Activated CD4-positive, alpha-beta T cell treated with anti-CD3 and anti-CD28 coated beads for 36 hours (primary cell): ENCODE measurements at regions of chr1 and their contacts with region 1.

Region 1: DNA sequence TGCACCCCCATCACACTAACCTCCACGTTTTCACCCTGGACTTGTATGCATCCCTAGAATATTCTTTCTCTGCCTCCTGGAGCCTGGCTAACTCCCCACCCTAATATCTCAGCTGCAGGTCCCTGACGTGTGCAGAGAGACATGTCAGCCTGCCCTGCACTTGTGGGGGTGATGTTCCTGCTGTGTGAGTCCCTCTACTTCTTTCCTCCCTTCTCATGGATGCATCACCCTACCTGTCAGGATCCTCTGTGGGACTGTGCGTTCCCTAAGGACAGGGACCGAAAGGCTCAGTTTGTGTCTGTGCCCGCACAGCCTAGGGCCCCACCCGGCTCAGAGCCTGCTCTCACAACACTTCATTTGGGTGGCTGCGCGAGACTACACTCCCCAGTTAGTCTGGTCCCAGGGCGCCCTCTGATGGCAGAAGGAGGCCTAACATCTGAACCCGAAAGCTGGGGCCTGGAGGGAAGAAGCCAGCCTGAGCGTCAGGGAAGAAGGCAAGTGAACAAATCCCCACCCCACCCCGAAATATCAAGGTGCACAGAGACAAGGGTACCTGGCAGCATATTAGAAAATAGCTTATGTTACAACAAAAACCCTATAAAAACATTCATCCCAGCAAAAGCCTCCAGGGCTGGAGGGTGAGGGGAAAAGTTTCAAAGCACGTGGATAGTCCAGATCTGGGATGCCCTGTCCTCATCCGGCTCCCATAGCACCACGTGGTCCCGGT is 3.7 kb downstream of the CD52 start:
- DNase-seq: peak; percentile 97
- ATAC-seq: peak; percentile 62
- H3K4me3 Mint-ChIP-seq: peak overlapping the region; percentile 59
- H3K27ac Mint-ChIP-seq: peak overlapping the region; percentile 96
- H3K4me1 Mint-ChIP-seq: peaks cover 51% of the 10 kb centered on the region
- H3K27me3 Mint-ChIP-seq: no peaks in the 10 kb centered on the region

Region 2: DNA sequence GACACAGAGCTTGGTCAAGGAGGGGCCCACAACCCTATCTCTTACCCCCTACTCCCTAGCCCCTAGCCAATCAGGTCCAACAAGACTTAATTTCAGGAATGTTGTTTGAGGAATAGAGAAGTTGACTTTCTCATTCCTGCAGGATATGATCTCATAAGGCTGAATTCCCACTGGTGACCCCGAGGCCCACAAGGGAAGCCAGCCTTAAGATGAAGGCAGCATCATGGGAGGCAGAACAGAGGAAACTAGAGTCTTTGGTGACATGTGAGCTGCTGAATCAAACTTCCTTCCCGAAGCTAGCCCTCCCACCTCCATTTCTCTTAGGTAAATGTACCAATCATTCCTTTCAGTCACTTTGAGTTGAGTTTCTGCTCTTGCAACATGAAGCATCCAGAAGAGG is 219.0 kb before region 1 on chr1:
- CTCF ChIA-PET with region 1: no interaction called
- POLR2A ChIA-PET with region 1: no interaction called
- intact Hi-C with region 1: loop called (anchors 1 to 2 kb)
- DNase-seq: no peak
- ATAC-seq: no peak
- H3K4me3 Mint-ChIP-seq: no peak overlapping the region
- H3K27ac Mint-ChIP-seq: no peak overlapping the region
- H3K4me1 Mint-ChIP-seq: peaks cover 7% of the 10 kb centered on the region
- H3K27me3 Mint-ChIP-seq: no peaks in the 10 kb centered on the region

Region 3: DNA sequence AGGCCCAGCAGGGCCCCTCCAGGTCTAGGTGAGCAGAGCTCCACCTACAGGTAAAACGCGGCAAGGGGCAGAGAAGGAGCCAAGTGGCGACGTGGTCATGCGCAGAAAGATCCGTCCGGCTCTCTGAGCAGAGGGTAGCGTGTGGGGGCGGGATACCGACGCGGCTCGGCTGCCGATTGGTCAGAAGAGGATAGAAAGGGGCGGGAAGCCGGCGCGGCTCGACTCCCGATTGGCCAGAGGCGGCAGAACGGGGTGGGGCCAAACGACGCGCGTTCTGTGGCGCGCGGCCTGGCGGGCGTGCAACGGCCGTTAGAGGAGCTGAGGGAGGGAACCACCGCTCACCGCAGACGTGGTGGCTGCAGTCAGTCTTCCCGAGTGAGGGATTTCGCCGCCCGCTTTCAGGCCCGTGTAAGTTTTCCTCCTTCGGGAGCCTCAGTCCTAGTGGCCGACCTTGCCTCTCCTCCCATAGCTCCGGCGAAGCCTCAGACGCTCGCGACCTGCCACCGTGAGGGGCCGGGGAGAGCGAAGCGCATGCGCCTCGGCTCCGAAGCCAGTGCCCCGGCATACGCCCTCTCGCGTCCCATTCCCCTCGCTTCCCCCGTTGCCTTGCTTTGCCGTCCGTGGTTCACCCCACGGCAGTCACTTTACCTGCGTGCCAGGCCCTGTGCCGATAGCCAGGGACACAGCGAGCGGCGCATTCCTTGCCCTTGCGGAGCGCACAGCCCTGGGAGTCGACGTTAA is 87.4 kb before region 1 on chr1 and contains the start of gene CEP85:
- CTCF ChIA-PET with region 1: interaction called, 13 read pairs
- POLR2A ChIA-PET with region 1: no interaction called
- intact Hi-C with region 1: loop called in 1 of 2 experiments (anchors 1 kb)
- DNase-seq: peak; percentile 99
- ATAC-seq: peak; percentile 95
- H3K4me3 Mint-ChIP-seq: peak within 1 kb of the TSS; percentile 99
- H3K27ac Mint-ChIP-seq: peak within 1 kb of the TSS; percentile 96
- H3K4me1 Mint-ChIP-seq: peaks cover 32% of the 10 kb centered on the region
- H3K27me3 Mint-ChIP-seq: no peaks in the 10 kb centered on the region
- total RNA-seq, gene CEP85: 31.1 to 31.9 TPM

Region 4: DNA sequence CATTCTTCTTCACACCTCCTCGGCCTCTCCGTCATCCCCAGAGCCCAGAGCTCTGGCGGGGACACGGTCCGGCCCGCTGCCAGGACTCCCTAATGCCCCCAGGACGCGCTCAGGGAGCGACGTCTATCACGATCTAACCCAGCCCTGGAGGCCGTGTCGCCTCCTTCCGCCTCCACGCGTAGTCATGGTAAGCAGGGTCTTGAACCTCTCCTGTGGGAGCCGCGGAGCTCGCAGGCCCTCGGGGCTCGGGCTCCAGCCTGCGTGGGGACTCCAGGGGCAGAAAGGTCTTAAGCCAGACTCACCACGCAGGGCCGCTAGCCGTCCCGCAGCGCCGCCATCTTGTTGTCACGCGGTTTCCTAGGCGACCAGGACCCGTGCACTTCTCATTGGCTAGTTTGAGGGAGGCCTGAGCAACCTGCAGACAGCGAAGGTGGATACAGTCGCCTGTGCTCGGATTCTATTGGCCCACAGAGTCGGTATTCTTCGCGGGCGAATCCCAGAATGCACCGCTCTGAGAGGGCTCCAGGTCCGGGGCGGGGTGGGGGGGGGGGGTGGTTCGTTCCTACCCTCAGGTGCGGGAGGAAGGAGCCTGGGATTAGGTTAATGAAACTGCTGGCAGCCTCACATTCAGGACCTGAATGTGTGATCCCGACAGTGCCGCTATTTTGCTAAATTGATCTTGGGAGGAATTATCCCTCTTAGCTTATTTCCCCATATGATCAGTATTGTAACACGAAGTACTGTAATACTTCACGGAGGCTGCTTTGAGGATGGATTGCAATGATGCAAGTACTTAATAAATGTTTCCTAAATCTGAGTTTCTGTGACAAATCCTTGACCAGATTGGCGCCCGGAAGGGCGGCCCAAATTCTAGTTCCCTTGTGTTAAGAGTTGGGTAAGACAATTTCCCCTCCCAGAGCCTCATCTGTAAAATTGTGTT is 14.9 kb before region 1 on chr1 and contains the start of gene UBXN11:
- CTCF ChIA-PET with region 1: interaction called, 87 read pairs
- POLR2A ChIA-PET with region 1: interaction called, 25 read pairs
- intact Hi-C with region 1: loop called (anchors 1 to 2 kb)
- DNase-seq: peak; percentile 96
- ATAC-seq: peak; percentile 94
- H3K4me3 Mint-ChIP-seq: peak within 1 kb of the TSS; percentile 90
- H3K27ac Mint-ChIP-seq: peak within 1 kb of the TSS; percentile 95
- H3K4me1 Mint-ChIP-seq: peaks cover 32% of the 10 kb centered on the region
- H3K27me3 Mint-ChIP-seq: no peaks in the 10 kb centered on the region
- total RNA-seq, gene UBXN11: 19.4 to 22.2 TPM

Region 5: DNA sequence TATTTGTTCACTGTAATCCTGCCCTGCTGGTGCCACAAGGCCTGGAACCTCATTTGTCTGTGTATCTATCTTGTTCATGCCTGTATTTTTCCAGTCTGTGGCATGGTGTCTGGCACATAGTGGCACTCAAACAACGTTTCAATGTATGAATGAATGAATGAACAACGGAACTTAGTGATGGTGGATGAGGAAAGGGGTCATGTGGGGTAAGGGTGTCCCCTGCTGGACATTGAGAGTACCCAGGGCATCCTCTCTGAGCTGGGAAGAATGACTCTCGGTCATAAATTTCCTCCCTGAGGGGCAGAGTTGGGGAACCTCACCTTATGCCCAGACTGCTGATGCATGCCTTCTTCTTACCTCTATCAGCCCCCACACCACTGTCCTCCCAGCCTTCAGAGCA is 70.0 kb after region 1 on chr1:
- CTCF ChIA-PET with region 1: interaction called, 5 read pairs
- POLR2A ChIA-PET with region 1: no interaction called
- intact Hi-C with region 1: loop called in 1 of 2 experiments (anchors 5 kb)
- DNase-seq: peak; percentile 57
- ATAC-seq: peak; percentile 74
- H3K4me3 Mint-ChIP-seq: no peak overlapping the region
- H3K27ac Mint-ChIP-seq: no peak overlapping the region
- H3K4me1 Mint-ChIP-seq: peaks cover 28% of the 10 kb centered on the region
- H3K27me3 Mint-ChIP-seq: no peaks in the 10 kb centered on the region

Region 6: DNA sequence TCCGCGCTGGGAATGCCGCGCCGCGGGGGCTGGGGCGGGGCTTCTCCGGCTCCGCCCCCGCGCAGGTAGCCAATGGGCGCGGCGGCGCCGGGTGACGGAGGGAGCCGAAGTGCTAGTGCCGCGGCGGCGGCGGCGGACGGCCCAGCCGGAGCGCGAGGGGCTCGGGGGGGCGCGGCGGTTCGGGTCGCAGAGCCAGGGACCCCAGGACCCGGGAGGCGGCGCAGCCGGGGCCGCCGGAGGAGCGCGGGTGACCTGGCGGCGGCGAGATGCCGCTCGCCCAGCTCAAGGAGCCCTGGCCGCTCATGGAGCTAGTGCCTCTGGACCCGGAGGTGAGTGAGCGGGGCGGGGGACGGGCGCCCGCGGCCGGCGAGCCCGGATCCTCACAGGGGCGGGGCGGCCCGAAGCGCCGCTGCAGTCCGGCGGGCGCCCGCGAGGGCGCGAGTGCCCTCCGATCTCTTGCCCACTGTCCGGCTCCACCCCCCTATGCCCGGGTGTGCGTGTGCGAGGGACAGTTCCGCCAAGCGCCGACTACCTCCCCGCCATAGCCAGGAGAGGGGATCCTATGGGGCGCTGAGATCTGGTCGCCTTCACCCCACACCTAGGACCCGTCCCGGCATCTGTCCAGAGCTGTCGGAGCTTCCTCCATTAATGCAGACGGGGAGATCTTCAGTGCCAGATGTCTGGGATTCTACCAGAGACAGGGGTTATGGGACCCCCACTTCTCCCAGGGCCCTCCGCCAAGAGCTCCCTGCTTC is 208.4 kb after region 1 on chr1 and contains the start of gene RPS6KA1:
- CTCF ChIA-PET with region 1: no interaction called
- POLR2A ChIA-PET with region 1: no interaction called
- intact Hi-C with region 1: no loop called
- DNase-seq: peak; percentile 78
- ATAC-seq: peak; percentile 88
- H3K4me3 Mint-ChIP-seq: peak within 1 kb of the TSS; percentile 81
- H3K27ac Mint-ChIP-seq: peak within 1 kb of the TSS; percentile 87
- H3K4me1 Mint-ChIP-seq: peaks cover 21% of the 10 kb centered on the region
- H3K27me3 Mint-ChIP-seq: no peaks in the 10 kb centered on the region
- total RNA-seq, gene RPS6KA1: 116 to 160 TPM